ENCODE measurements at regions of chr5 and their contacts with region 1.

Region 1: GRCh38 chr5:148730943-148731861 is 76.9 kb upstream of the HTR4 start:
- DNase-seq: no peak
- ATAC-seq: peak; percentile 93
- H3K4me3 ChIP-seq: no peak overlapping the region
- H3K27ac ChIP-seq: no peak overlapping the region
- H3K4me1 ChIP-seq: peaks cover 4% of the 10 kb centered on the region
- H3K27me3 ChIP-seq: no peaks in the 10 kb centered on the region
- CTCF ChIP-seq: peak; percentile 97

Region 2: GRCh38 chr5:148443998-148444397 is 287.2 kb before region 1 on chr5:
- intact Hi-C with region 1: loop called (anchors 5 kb)
- DNase-seq: no peak
- ATAC-seq: peak; percentile 92
- H3K4me3 ChIP-seq: no peak overlapping the region
- H3K27ac ChIP-seq: no peak overlapping the region
- H3K4me1 ChIP-seq: no peaks in the 10 kb centered on the region
- H3K27me3 ChIP-seq: no peaks in the 10 kb centered on the region
- CTCF ChIP-seq: peak; percentile 77

Region 3: GRCh38 chr5:148849461-148849860 is 118.3 kb after region 1 on chr5:
- intact Hi-C with region 1: no loop called
- DNase-seq: no peak
- ATAC-seq: peak; percentile 74
- H3K4me3 ChIP-seq: no peak overlapping the region
- H3K27ac ChIP-seq: no peak overlapping the region
- H3K4me1 ChIP-seq: no peaks in the 10 kb centered on the region
- H3K27me3 ChIP-seq: no peaks in the 10 kb centered on the region
- CTCF ChIP-seq: no peak

Region 4: DNA sequence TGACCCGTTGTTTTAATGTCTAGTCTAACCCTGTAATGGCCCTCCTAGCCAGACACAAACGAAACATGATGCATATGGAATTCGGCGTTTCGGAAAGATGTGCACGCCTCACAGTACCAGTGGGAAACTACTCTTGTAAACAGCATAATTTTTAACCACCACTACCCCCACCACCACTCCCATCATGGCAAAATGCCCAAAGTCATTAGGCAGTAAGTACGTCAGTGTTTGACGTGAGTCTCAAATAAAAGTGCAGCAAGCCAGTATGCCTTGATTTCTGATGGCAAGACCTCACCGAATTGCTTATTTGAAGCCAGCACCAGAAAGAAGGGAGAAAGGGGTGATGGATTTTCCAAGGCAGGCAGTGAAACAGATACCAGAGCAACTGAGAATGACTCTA is 166.6 kb after region 1 on chr5:
- intact Hi-C with region 1: no loop called
- DNase-seq: no peak
- ATAC-seq: no peak
- H3K4me3 ChIP-seq: no peak overlapping the region
- H3K27ac ChIP-seq: no peak overlapping the region
- H3K4me1 ChIP-seq: no peaks in the 10 kb centered on the region
- H3K27me3 ChIP-seq: no peaks in the 10 kb centered on the region
- CTCF ChIP-seq: no peak

Region 5: GRCh38 chr5:148937239-148937638 is 206.0 kb after region 1 on chr5:
- intact Hi-C with region 1: no loop called
- DNase-seq: no peak
- ATAC-seq: no peak
- H3K4me3 ChIP-seq: no peak overlapping the region
- H3K27ac ChIP-seq: no peak overlapping the region
- H3K4me1 ChIP-seq: peaks cover 6% of the 10 kb centered on the region
- H3K27me3 ChIP-seq: no peaks in the 10 kb centered on the region
- CTCF ChIP-seq: no peak

Region 6: GRCh38 chr5:148998174-148998797 is 267.1 kb after region 1 on chr5:
- intact Hi-C with region 1: loop called (anchors 10 kb)
- DNase-seq: no peak
- ATAC-seq: peak; percentile 84
- H3K4me3 ChIP-seq: no peak overlapping the region
- H3K27ac ChIP-seq: no peak overlapping the region
- H3K4me1 ChIP-seq: peaks cover 4% of the 10 kb centered on the region
- H3K27me3 ChIP-seq: no peaks in the 10 kb centered on the region
- CTCF ChIP-seq: peak; percentile 72

Region 7: DNA sequence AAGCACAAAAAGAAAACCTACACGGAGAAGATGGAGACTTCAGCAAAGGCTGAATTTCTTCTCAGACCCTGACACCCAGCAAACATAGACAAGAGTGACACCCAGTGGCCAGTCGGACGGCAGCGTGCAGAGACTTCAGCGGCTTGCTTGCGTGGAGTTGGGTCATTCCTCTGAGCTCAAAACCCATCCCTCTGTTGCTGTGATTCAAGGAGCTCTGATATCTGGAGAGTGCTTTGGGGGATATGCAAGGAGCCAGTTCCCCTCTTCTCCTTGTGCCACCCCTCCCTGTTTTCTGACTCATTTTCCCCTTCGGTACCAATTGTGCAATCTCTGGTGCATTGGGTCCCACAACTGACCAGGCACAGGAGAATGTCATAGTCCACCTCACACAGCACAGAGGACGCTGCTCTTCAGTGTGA is 304.2 kb after region 1 on chr5:
- intact Hi-C with region 1: loop called (anchors 10 kb)
- DNase-seq: peak; percentile 85
- ATAC-seq: peak; percentile 94
- H3K4me3 ChIP-seq: no peak overlapping the region
- H3K27ac ChIP-seq: no peak overlapping the region
- H3K4me1 ChIP-seq: peaks cover 4% of the 10 kb centered on the region
- H3K27me3 ChIP-seq: no peaks in the 10 kb centered on the region
- CTCF ChIP-seq: peak; percentile 87

Region 8: DNA sequence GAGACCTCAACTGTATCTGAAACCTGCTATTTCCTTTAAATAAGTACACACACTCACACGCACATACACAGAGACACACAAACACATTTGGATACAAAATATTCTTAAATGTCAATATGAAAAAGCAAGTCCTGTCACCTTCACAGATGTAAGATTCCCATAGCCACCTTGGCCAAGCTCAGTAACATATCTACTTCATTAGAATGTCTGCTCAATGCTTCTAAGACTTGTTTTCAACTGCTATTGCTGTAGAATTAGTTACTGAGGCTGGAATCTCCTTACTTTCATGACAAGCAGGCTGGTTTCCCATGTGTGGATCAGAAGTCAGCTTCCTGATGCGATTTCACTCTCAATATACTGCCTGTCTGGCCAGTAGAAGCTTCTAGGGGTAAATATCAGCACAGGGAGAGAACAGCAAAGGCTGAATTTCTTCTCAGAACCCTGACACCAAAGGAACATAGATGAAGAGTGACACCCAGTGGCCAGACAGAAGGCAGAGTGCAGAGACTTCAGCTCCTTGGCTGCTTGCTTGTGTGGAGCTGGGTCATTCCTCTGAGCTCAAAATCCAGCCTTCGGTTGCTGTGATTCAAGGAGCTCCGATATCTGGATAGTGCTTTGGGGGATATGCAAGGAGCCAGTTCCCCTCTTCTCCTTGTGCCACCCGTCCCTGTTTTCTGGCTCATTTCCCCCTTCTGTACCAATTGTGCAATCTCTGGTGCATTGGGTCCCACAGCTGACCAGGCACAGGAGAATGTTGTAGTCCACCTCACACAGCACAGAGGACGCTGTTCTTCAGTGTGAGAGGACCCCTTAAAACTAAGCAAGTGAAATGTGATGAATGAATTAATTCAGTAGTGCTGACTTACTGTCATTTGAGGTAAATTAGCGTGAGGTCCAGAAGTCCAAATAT is 383.5 kb after region 1 on chr5:
- intact Hi-C with region 1: loop called (anchors 10 kb)
- DNase-seq: no peak
- ATAC-seq: peak; percentile 96
- H3K4me3 ChIP-seq: no peak overlapping the region
- H3K27ac ChIP-seq: peak overlapping the region; percentile 24
- H3K4me1 ChIP-seq: peaks cover 7% of the 10 kb centered on the region
- H3K27me3 ChIP-seq: no peaks in the 10 kb centered on the region
- CTCF ChIP-seq: peak; percentile 71

Measured in upper lobe of right lung (tissue), 1 donor.